ENCODE measurements at regions of chr6 and their contacts with region 1.

Region 1: DNA sequence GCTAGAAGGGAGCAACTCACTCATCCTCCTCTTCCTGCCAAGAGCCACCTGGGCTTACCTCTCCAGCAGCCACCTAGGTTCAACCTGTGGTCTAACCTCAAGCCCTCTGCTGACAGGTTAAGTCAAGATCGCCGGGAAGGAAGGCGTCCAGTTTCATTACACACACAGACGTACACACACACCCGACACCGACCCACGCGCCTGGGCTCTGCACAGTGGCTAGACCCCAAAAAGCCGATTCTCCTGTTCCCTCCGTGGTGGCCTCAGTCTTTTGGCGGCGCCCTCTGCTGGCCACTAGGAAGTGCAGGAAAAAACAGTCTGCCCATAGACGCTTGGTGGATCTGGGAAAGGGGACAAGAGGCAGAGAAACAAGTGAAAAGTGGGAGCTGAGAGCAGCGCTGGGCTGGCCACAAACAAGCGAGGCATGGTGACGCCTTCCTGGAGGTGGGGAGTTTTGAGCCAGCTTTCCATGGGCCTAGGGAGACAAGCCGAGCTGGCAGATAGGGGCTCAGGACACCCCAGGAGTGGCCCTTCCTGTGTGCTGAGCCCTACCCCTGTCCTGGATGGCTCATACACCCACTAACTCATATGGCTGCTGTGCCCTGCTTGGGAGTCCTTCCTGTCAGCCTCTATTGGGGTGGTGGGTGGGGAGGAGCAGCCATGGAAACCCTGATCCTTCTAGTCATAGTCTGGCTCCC is 52.7 kb downstream of the MRPL14 start:
- H3K4me3 ChIP-seq: no peak overlapping the region
- H3K27ac ChIP-seq: peak overlapping the region; percentile 19; the same call in 1 of the 2 replicates
- H3K4me1 ChIP-seq: 0 out of 2 replicates have a peak, but pooled peaks cover 3% of the 10 kb centered on the region
- CTCF ChIP-seq: peak; percentile 94

Region 2: GRCh38 chr6:43228951-43229802 is 845.4 kb before region 1 on chr6 and contains the start of gene DNPH1:
- CTCF ChIA-PET with region 1: no interaction called
- POLR2A ChIA-PET with region 1: no interaction called
- H3K4me3 ChIP-seq: peak within 1 kb of the TSS; percentile 87
- H3K27ac ChIP-seq: peak within 1 kb of the TSS; percentile 66
- H3K4me1 ChIP-seq: no peaks in the 10 kb centered on the region; the same call in 1 of the 2 replicates
- CTCF ChIP-seq: peak; percentile 75

Region 3: DNA sequence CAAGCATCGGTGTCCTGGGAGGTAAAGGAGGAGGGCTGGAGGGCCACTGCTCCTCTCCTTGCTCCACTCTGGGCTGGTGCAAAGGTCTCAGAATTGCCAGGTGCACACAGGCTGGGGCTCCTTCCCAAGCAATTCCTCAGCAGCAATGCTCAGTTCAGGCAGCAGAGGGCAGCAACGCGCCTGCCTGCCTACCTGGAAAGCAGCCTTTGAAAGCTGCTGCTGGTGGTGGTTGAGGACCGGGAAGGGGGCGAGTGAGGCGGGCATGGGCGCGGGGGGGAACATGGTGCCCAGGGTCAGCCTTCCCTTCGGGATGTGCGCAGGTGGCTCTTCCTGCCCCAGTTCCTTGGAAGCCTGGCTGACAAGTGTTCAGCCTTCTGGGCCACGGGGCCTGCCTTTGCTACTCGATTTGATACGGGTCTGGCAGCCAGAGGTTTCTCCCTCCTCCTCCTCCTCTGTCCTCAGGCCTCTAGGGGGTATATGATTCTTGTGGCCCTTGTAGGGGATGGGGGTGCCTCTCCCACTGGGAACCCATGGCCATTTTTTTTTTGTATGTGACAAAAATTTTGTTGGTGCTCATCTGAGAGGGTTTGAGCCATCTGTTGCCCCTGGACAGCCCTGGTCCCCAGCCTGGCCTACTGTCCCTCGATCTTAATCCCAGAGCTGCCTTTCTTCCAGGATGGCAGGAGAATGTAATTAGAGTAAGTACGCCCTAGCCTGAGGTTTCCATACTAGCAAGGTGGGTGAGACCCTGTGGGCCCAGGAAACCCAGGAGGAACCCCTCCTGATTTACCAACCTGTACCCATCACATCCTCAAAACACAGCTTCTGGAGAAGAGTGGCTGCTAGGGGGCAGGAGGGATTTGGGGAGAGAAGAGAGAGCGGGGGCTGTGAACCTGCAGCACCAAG is 407.1 kb before region 1 on chr6:
- CTCF ChIA-PET with region 1: interaction called, 89 read pairs
- POLR2A ChIA-PET with region 1: interaction called, 4 read pairs
- H3K4me3 ChIP-seq: peak overlapping the region; percentile 10; the same call in 1 of the 2 replicates
- H3K27ac ChIP-seq: peak overlapping the region; percentile 19
- H3K4me1 ChIP-seq: peaks cover 3% of the 10 kb centered on the region; the same call in 1 of the 2 replicates
- CTCF ChIP-seq: peak; percentile 97

Region 4: GRCh38 chr6:43758617-43759050 is 316.0 kb before region 1 on chr6:
- CTCF ChIA-PET with region 1: interaction called, 23 read pairs
- POLR2A ChIA-PET with region 1: no interaction called
- H3K4me3 ChIP-seq: no peak overlapping the region
- H3K27ac ChIP-seq: no peak overlapping the region
- H3K4me1 ChIP-seq: no peaks in the 10 kb centered on the region; the same call in 1 of the 2 replicates
- CTCF ChIP-seq: peak; percentile 30; the same call in 1 of the 2 replicates

Region 5: GRCh38 chr6:44002593-44003344 is 71.8 kb before region 1 on chr6:
- CTCF ChIA-PET with region 1: interaction called, 20 read pairs
- POLR2A ChIA-PET with region 1: no interaction called
- H3K4me3 ChIP-seq: peak overlapping the region; percentile 35
- H3K27ac ChIP-seq: peak overlapping the region; percentile 47; the same call in 1 of the 2 replicates
- H3K4me1 ChIP-seq: peaks cover 2% of the 10 kb centered on the region; the same call in 1 of the 2 replicates
- CTCF ChIP-seq: peak; percentile 77

Region 6: DNA sequence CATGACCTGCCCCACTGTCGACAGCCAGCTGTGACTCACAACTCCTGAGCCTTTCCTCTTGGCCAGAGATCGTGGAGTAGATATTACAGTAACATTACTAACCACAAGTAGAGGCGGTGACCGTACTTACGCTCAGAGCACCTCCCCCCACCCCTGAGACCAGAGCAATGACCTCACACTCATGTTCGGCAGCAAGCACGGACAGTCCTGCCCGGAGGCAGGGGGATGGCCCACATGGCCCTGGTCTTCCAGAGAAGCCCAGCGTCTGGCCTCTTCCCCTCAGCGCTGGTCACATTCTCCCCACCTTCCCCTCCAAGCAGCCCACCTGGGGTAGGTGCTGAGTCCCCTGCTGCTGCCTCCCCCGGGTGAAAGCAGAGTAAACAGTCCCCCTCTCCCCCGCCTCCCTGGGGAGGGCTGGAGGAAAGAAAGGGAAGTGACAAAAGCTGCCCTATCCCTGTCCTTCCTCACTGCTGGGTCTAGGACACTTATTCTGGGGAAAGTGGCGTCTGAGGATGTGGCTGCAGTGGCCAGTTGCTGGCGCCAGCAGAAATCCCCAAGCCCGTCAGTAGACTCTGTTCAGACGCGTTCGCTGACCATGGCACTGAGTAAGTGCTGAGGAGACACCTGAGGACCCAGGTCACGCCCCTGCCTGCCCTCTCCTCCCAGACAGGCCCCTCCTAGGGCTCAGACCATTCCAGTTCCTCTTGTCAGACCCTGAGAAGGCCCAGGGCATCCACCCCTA is 15.8 kb before region 1 on chr6:
- CTCF ChIA-PET with region 1: interaction called, 35 read pairs
- POLR2A ChIA-PET with region 1: interaction called, 4 read pairs
- H3K4me3 ChIP-seq: no peak overlapping the region
- H3K27ac ChIP-seq: no peak overlapping the region
- H3K4me1 ChIP-seq: no peaks in the 10 kb centered on the region
- CTCF ChIP-seq: no peak